ENCODE measurements at regions of chr6 and their contacts with region 1.

Region 1: DNA sequence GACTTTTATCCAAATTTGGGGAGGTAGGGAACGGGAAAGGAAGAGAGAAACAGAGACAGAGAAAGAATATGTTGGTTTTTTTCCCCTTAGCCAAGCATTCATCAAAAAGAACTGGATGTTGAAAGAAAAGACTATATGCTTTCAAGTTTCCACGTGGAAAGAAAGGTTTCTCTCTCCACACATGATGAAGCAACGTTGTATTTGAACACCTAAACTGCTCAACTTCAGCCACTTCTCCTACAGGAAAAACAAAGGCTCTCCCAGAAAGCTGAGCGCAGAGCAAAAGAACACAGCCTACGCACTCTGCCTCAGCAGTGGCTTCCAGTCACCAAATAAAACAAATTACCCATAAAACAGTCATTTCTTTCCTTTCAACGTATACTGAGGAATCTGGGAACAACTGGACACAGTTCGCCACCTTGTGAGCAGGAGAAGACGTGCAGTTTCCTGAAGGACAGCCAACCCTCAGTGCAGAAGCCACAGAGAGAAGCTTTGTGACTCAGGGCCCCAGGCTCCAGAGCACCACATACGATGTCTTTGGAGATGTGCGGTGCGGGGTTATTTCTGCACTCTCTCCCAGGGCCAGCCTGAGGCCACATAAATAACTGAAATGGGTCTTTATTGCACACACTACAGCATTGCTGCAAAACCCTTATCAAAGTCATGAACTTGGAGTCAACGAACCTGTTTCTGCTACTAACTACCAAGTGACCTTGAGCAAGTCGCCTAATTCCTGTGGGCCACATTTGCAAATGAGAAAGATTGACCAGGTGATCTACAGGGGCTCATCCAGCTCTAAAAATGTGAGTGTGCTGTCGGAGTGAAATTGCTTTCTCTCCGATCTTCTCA is 10.1 kb downstream of the IL17F start:
- DNase-seq: peak; percentile 83
- H3K4me3 Mint-ChIP-seq: no peak overlapping the region
- H3K27ac Mint-ChIP-seq: no peak overlapping the region
- H3K4me1 Mint-ChIP-seq: no peaks in the 10 kb centered on the region
- H3K27me3 Mint-ChIP-seq: peaks cover 38% of the 10 kb centered on the region
- CTCF ChIP-seq: peak; percentile 67

Region 2: DNA sequence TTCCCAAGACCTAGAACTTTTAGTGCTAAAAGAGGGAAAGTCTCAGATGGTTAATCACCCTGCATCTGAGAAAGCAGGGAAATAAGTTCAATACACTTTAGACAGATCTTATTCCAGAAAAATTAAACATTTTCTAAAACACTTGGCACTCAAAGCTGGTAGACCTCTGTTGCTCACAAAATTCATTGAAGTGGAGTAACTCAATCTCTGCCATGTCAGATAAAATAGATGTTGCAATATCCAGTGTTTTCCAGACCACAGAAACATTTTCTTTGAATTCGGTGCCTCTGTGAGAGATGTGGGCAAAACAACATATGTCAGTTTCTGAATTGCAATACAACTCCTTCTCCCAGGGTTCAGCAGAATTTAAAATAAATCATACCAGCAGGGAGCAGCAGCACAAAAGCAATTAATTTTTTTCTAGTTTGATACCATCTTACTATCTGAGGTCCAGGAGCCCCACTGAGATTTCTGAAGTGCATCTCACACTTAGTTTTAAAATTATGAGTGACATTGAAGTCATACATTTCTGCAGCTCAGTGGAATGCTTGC is 135.5 kb before region 1 on chr6:
- CTCF ChIA-PET with region 1: interaction called, 15 read pairs
- POLR2A ChIA-PET with region 1: no interaction called
- intact Hi-C with region 1: loop called (anchors 1 kb)
- DNase-seq: peak; percentile 9
- H3K4me3 Mint-ChIP-seq: no peak overlapping the region
- H3K27ac Mint-ChIP-seq: no peak overlapping the region
- H3K4me1 Mint-ChIP-seq: no peaks in the 10 kb centered on the region
- H3K27me3 Mint-ChIP-seq: peaks cover 25% of the 10 kb centered on the region
- CTCF ChIP-seq: peak; percentile 26

Region 3: GRCh38 chr6:52176550-52176949 is 57.6 kb before region 1 on chr6:
- CTCF ChIA-PET with region 1: interaction called, 14 read pairs
- POLR2A ChIA-PET with region 1: no interaction called
- intact Hi-C with region 1: no loop called
- DNase-seq: no peak
- H3K4me3 Mint-ChIP-seq: no peak overlapping the region
- H3K27ac Mint-ChIP-seq: no peak overlapping the region
- H3K4me1 Mint-ChIP-seq: no peaks in the 10 kb centered on the region
- H3K27me3 Mint-ChIP-seq: no peaks in the 10 kb centered on the region
- CTCF ChIP-seq: no peak

Region 4: DNA sequence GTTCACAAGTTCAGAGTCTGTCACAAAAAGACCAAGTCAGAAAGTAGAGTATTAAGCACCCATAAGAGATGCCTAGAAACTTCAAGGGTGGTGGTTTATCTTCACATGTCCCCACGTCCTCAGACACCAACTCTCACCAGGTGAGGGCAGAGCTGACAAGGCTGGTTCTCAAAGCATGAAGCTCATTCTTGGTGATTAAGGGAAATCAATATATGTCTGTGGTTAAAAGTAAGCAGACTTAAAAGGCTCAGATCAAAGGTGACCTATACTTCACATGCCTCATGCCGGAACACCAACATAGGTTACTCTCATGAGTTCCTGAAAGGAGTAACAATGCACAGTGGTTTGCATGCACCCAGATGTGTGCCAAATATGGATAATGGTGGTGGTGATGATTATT is 21.1 kb before region 1 on chr6:
- CTCF ChIA-PET with region 1: interaction called, 13 read pairs
- POLR2A ChIA-PET with region 1: no interaction called
- intact Hi-C with region 1: no loop called
- DNase-seq: no peak
- H3K4me3 Mint-ChIP-seq: no peak overlapping the region
- H3K27ac Mint-ChIP-seq: no peak overlapping the region
- H3K4me1 Mint-ChIP-seq: no peaks in the 10 kb centered on the region
- H3K27me3 Mint-ChIP-seq: peaks cover 14% of the 10 kb centered on the region
- CTCF ChIP-seq: no peak

Region 5: DNA sequence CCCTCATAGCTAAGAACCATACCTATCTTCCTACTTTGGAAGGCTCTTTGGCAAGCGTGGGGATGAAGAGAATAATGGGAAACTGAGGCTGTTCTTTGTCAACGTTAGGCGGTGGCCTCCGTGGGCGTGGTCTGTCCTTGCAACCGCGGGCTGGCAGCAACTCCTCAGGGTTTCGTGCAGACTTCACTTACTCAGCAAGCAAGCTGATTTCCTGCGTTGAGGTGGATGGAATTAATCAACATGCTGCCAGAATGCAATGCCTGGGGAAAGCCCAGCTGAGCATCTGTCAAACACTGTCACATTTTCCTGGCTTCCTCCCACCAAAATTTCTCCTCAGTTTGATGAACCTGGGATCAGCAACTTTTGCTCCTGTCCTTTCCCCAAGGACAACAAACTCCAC is 19.3 kb after region 1 on chr6:
- CTCF ChIA-PET with region 1: interaction called, 11 read pairs
- POLR2A ChIA-PET with region 1: interaction called, 3 read pairs
- intact Hi-C with region 1: no loop called
- DNase-seq: peak; percentile 8
- H3K4me3 Mint-ChIP-seq: no peak overlapping the region
- H3K27ac Mint-ChIP-seq: no peak overlapping the region
- H3K4me1 Mint-ChIP-seq: peaks cover 7% of the 10 kb centered on the region
- H3K27me3 Mint-ChIP-seq: peaks cover 55% of the 10 kb centered on the region
- CTCF ChIP-seq: no peak

Region 6: DNA sequence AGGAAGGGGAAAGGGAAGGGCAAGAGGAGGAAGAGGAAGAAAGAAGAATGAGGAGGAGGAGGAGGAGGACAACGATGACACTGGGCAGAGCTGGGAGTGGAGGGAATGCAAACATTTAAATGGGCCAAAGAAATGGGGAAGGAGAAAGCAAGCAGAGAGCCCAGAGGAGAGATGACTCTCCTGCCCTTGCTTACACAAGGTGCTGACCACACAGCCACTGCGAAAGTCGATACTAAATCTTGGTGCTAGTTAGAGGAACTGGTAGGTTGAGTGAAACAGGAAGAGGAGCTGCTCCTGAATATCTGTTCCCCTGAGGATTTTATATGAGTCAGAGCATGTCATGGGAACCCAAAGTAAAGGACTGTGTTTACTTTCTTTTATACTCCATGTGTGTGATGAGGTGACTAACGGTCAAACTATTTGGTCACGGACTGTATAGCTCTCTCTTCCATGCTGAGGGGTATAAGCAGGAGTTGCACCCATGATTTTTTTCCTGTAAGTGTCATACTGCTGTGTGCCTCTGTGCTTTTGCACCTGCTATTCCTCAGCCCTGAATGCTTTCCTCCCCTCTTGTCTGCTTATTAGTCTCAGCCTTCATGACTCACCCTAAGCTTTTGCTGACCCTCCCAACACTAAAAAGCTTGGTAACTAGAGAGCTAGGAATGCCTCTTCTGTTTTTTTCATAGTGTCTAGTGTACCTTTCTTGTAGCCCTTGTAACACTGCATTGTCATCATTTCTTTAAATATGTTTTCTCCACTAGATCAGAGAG is 118.2 kb after region 1 on chr6:
- CTCF ChIA-PET with region 1: no interaction called
- POLR2A ChIA-PET with region 1: no interaction called
- intact Hi-C with region 1: no loop called
- DNase-seq: peak; percentile 95
- H3K4me3 Mint-ChIP-seq: peak overlapping the region; percentile 58
- H3K27ac Mint-ChIP-seq: peak overlapping the region; percentile 97
- H3K4me1 Mint-ChIP-seq: peaks cover 16% of the 10 kb centered on the region
- H3K27me3 Mint-ChIP-seq: no peaks in the 10 kb centered on the region
- CTCF ChIP-seq: no peak